Activated CD4-positive, alpha-beta memory T cell treated with anti-CD3 and anti-CD28 coated beads for 36 hours (primary cell): ENCODE measurements at regions of chr11 and their contacts with region 1.

Region 1: DNA sequence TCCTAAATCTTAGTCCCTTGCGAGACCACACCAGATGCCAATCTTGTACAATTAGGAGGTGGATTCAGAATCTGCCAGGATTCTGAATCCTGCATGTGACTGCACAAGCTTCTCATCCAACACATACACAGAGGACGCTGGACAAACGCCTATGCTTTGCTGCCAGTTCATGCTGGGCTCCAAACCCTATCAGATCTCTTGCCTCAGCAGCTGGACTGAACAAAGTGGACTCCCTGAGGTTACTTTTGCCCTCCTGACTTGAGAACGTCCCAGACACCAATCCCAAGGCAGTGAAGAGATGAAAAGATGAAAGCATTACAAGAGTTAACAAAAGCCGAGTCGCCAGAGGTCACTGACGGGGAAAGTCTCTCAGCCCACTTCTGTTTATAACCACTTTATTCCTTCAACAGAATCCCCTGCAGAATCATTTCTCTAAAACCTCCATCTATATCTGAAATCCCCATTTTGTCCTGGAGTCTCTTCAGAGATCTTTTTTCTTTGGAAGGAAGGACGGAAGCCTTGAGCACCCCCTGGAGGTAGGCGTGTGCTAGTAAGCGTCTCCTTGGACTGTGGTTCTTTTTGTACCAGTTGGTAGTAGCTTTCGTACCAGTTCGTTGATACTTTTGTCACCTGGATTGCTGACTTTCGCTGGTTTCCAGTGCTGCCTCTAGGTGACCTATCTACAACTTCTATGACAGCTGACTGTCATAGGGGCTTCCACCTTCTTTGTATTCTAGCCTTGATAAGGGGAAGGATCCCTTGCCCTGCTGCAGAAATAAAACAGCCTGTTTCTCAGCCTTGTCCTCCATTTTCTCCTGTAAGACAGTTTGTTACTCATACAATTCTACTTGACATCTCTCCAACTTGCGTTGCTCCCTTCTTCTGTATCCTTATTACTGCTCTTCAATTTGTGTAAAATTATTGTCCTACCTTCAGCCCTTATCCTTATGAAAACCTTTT is 26.1 kb upstream of the EED start:
- DNase-seq: peak; percentile 79
- H3K4me3 Mint-ChIP-seq: peak overlapping the region; percentile 56
- H3K27ac Mint-ChIP-seq: peak overlapping the region; percentile 92
- H3K4me1 Mint-ChIP-seq: peaks cover 76% of the 10 kb centered on the region
- H3K27me3 Mint-ChIP-seq: no peaks in the 10 kb centered on the region

Region 2: DNA sequence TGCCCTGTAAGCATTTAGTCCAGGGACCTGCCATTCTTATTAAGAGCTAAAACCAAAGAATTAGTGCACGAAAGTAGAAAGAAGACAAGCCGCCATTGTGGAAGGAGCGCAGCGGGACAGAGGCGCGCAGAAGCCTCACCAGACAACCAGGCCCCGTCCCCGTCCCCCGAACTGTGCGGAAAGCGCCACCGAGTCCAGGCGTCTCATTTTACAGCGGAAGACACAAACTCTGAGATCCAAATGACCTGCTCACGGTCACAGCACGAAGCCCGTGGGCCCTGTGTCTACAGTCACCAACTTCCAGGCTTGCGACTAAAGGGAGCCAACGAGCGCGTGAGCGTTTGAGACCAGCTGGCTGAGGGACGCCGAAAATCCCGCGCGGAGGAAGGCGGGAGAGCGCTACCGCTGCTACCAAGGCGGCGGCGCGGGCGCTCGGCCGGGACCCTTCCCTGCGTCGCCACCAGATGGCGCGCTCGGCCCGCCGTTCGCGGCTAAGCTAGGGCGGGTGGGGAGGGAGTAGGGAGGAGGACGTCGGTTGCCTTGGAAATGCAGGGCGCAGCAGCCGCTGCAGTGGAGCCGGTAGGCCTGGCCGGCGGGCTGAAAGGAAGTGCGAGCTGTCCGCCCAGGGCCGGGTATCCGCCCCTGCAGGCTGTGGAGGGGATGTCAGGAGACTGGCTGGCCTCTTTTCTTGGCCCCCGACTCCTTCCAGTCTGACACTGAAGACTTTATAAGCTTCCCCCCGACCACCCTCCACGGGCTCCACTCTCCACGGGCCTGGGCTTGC is 363.7 kb before region 1 on chr11:
- CTCF ChIA-PET with region 1: interaction called, 4 read pairs
- POLR2A ChIA-PET with region 1: no interaction called
- intact Hi-C with region 1: loop called (anchors 2 kb)
- DNase-seq: peak; percentile 96
- H3K4me3 Mint-ChIP-seq: peak overlapping the region; percentile 86
- H3K27ac Mint-ChIP-seq: peak overlapping the region; percentile 87
- H3K4me1 Mint-ChIP-seq: peaks cover 10% of the 10 kb centered on the region
- H3K27me3 Mint-ChIP-seq: no peaks in the 10 kb centered on the region

Region 3: DNA sequence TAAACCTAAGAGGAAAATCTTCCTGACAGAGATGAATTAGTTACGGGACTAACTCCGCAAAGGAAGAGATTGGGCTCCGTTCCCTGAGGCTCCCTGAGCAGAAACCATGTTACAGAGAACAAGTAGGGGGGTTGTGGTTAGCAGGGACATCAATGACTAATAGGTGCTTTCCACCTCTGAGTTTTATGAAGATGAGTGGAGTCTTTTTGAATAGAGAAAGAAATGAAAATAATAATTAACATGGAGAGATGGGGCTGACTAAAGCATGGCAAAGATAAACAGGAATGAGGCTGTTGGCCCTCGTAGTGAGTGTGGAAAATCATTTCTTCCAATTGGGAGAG is 102.0 kb before region 1 on chr11:
- CTCF ChIA-PET with region 1: no interaction called
- POLR2A ChIA-PET with region 1: no interaction called
- intact Hi-C with region 1: loop called (anchors 5 kb)
- DNase-seq: peak; percentile 59
- H3K4me3 Mint-ChIP-seq: peak overlapping the region; percentile 40
- H3K27ac Mint-ChIP-seq: peak overlapping the region; percentile 44
- H3K4me1 Mint-ChIP-seq: peaks cover 34% of the 10 kb centered on the region
- H3K27me3 Mint-ChIP-seq: peaks cover 2% of the 10 kb centered on the region

Region 4: GRCh38 chr11:86202013-86202336 is 16.4 kb before region 1 on chr11:
- CTCF ChIA-PET with region 1: interaction called, 11 read pairs
- POLR2A ChIA-PET with region 1: interaction called, 11 read pairs
- intact Hi-C with region 1: loop called (anchors 1 kb)
- DNase-seq: peak; percentile 38
- H3K4me3 Mint-ChIP-seq: no peak overlapping the region
- H3K27ac Mint-ChIP-seq: no peak overlapping the region
- H3K4me1 Mint-ChIP-seq: peaks cover 5% of the 10 kb centered on the region
- H3K27me3 Mint-ChIP-seq: no peaks in the 10 kb centered on the region

Region 5: GRCh38 chr11:86418917-86419316 is 200.5 kb after region 1 on chr11:
- CTCF ChIA-PET with region 1: no interaction called
- POLR2A ChIA-PET with region 1: no interaction called
- intact Hi-C with region 1: loop called (anchors 10 kb)
- DNase-seq: peak; percentile 12
- H3K4me3 Mint-ChIP-seq: no peak overlapping the region
- H3K27ac Mint-ChIP-seq: no peak overlapping the region
- H3K4me1 Mint-ChIP-seq: peaks cover 6% of the 10 kb centered on the region
- H3K27me3 Mint-ChIP-seq: no peaks in the 10 kb centered on the region